CD8-positive, alpha-beta T cell (primary cell): ENCODE measurements at regions of chr11 and their contacts with region 1.

Region 1: DNA sequence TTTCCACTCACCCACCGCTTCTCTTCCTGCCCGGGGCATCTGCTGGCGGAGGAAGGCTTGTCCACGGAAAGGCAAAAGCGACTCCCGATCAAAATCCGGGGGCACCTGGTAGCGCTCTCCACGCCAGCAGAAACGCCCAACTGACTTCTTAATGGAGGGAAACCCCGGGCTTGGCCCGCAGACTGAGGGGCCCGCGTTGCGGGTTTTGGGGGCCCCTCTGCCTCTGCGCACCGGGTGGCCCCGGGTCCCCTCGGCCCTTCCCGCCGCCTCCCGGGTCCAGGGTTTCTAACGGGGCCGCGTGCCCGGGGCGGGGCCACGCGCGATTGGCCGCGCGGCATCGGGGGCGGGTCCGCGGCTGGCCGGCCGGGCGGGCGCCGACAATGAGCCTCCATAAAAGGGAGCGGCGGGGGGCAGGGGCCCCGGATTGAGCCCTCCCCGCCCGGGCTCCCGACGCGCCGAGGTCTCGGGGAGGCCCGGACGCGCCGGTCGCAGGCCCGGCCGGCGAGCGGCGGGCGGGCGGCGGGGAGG is at the start of gene SPINDOC:
- DNase-seq: peak; percentile 29 to 83 (median 70)
- ATAC-seq: peak; percentile 88
- H3K4me3 ChIP-seq: peak within 1 kb of the TSS; percentile 80 to 92
- H3K4me3 Mint-ChIP-seq: peak within 1 kb of the TSS; percentile 79
- H3K27ac ChIP-seq: peak within 1 kb of the TSS; percentile 35 to 44
- H3K27ac Mint-ChIP-seq: peak within 1 kb of the TSS; percentile 22
- H3K4me1 ChIP-seq: peaks cover 12% of the 10 kb centered on the region
- H3K4me1 Mint-ChIP-seq: peaks cover 24% of the 10 kb centered on the region
- H3K27me3 ChIP-seq: no peaks in the 10 kb centered on the region
- H3K27me3 Mint-ChIP-seq: no peaks in the 10 kb centered on the region
- CTCF ChIP-seq: no peak
- total RNA-seq, gene SPINDOC: 4.0 to 4.1 TPM

Region 2: GRCh38 chr11:63681321-63682049 is 131.6 kb before region 1 on chr11 and contains the start of gene RTN3:
- CTCF ChIA-PET with region 1: no interaction called
- POLR2A ChIA-PET with region 1: no interaction called
- intact Hi-C with region 1: loop called in 1 of 2 experiments (anchors 5 kb)
- DNase-seq: peak; percentile 97 to 99 (median 99)
- ATAC-seq: peak; percentile 88
- H3K4me3 ChIP-seq: peak within 1 kb of the TSS; percentile 79 to 88
- H3K4me3 Mint-ChIP-seq: peak within 1 kb of the TSS; percentile 88
- H3K27ac ChIP-seq: peak within 1 kb of the TSS; percentile 63 to 76
- H3K27ac Mint-ChIP-seq: peak within 1 kb of the TSS; percentile 93
- H3K4me1 ChIP-seq: peaks cover 21% of the 10 kb centered on the region
- H3K4me1 Mint-ChIP-seq: peaks cover 25% of the 10 kb centered on the region
- H3K27me3 ChIP-seq: no peaks in the 10 kb centered on the region
- H3K27me3 Mint-ChIP-seq: no peaks in the 10 kb centered on the region
- CTCF ChIP-seq: peak; percentile 47
- total RNA-seq, gene RTN3: 12.4 to 13.2 TPM